ENCODE measurements at regions of chr1 and their contacts with region 1.

Region 1: GRCh38 chr1:77146270-77146669 is 73.0 kb downstream of the PIGK start:
- DNase-seq: peak in 1 of 5 donors; percentile 16
- H3K4me3 ChIP-seq: no peak overlapping the region
- H3K27ac ChIP-seq: no peak overlapping the region
- H3K4me1 ChIP-seq: no peaks in the 10 kb centered on the region
- H3K27me3 ChIP-seq: no peaks in the 10 kb centered on the region
- CTCF ChIP-seq: no peak

Region 2: GRCh38 chr1:77068013-77068412 is 78.3 kb before region 1 on chr1:
- intact Hi-C with region 1: no loop called
- DNase-seq: no peak
- H3K4me3 ChIP-seq: no peak overlapping the region
- H3K27ac ChIP-seq: no peak overlapping the region
- H3K4me1 ChIP-seq: no peaks in the 10 kb centered on the region
- H3K27me3 ChIP-seq: no peaks in the 10 kb centered on the region
- CTCF ChIP-seq: no peak

Region 3: DNA sequence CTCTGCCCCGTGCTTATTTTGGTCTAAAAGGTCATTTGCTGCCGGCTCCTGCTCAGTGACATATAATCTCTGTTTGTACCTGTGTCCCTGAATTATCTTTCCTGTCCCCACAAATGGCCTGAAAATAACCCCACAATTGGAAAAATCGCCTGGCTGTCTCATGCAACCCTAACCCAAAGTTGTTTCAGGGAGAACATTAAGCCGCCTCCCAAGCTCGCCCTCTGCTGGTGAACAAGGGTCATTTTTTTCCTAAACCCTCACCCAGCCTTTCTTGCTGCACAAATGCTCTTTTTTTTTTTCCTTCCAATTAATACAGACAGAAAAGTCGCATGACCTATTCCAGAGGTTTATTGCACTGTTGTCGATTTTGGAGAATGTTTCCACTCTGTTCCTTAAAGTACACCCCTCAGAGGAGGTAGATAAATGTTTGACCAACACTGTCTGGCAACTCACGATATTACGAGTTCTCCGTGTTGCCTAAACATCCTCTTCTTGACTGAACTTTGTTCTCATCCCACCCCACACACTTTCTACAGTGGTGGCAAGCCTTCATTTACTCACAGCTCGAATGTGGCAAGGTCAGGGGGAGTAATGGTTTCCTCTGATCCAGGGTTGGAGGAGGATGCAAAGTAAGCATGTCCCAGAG is 387.5 kb after region 1 on chr1:
- intact Hi-C with region 1: loop called (anchors 5 kb)
- DNase-seq: peak in 4 of 5 donors; percentile 66 to 84 (median 74)
- H3K4me3 ChIP-seq: peak overlapping the region in 1 of 3 donors; percentile 43
- H3K27ac ChIP-seq: no peak overlapping the region
- H3K4me1 ChIP-seq: peaks cover 0 to 2% (median 0%) of the 10 kb centered on the region in 3 donors
- H3K27me3 ChIP-seq: no peaks in the 10 kb centered on the region
- CTCF ChIP-seq: peak; percentile 76

Measured in kidney (tissue), 22 donors.